Psoas muscle (tissue), 8 donors: ENCODE measurements at regions of chr13 and their contacts with region 1.

Region 1: DNA sequence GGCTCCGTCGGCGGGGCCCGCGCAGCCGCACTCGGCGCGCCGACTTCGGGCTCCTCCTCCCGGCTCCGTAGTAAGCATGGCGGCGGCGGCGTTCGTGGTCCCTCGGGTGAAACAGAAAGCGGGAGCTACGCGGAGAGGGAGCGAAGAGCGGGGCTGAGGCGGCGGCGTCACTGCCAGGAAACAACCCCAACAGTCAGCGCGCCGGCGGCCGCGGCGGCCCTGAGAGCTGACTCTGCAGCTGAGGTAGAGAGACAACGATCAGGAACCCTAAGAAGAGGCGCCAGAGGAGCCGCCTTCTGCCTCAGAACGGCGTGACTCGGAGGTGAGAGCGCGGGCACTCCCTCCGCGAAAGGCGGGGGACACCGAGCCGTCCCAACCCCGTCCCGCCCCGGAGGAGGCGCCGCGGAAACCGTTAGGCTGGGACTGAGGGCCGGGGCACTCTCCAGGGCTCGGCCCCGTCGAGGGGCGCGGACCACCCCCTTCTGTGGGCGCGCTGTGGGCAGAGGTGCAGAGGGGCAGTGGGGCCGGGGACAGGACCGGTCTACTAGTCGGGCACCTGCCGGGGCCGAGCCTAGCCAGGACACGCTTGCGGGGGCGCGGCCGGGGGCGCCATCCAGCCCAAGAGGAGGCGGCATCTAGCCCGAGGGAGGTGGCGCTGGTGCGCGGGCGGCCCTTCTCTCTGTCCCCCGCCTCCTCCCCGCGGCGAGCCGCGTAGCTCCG is at the start of gene FNDC3A:
- DNase-seq: peak; percentile 80 to 90
- ATAC-seq: peak; percentile 90 to 92 (median 92)
- H3K4me3 ChIP-seq: peak within 1 kb of the TSS; percentile 96
- H3K27ac ChIP-seq: peak within 1 kb of the TSS; percentile 96
- H3K4me1 ChIP-seq: peaks cover 27% of the 10 kb centered on the region
- H3K27me3 ChIP-seq: no peaks in the 10 kb centered on the region
- CTCF ChIP-seq: no peak
- total RNA-seq, gene FNDC3A: 10.5 to 18.6 (median 10.9) TPM

Region 2: DNA sequence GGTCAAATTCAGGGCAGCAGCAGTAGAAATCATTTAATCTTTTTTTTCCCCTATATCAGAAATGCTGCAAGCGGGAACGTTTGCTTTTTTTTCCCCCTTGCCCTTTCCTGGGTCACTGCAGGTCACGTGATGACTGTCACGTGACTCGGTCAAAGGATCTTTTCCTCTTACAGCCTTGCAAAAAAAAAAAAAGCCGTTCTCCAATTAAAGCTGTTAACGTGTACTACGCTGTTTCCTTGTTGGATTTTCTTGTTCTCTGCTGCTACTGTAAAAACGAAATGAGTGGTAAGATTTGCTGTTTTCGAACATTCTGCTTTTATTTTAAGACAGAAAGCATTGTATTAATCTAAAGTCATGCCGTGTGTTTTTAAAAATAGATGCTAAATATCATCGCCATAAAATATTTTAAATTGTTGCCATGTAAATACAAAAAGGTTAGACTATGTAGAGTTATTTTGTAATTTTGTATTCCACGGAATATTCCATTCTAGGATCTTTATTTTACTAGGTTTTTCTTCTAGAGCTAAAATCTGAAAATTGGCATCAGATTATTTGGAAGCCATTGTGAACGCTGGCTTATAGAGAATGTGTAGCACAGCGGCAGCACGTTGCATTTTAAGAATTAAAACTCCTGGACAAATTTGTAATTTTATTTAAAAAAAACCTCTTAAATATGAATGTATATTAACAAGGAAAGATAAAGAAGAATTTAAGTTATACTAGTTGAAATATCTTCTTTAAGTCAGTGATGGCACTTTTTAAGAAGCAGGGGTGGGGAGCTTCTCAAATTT is 134.3 kb after region 1 on chr13:
- intact Hi-C with region 1: loop called in 1 of 2 experiments (anchors 10 kb)
- DNase-seq: peak; percentile 82 to 87
- ATAC-seq: peak; percentile 86 to 97 (median 92)
- H3K4me3 ChIP-seq: peak overlapping the region; percentile 86
- H3K27ac ChIP-seq: peak overlapping the region; percentile 82
- H3K4me1 ChIP-seq: peaks cover 26% of the 10 kb centered on the region
- H3K27me3 ChIP-seq: no peaks in the 10 kb centered on the region
- CTCF ChIP-seq: no peak

Region 3: GRCh38 chr13:49247643-49248621 is 271.9 kb after region 1 on chr13 and contains the start of gene CDADC1:
- intact Hi-C with region 1: loop called in 1 of 2 experiments (anchors 5 kb)
- DNase-seq: peak; percentile 98 to 99
- ATAC-seq: peak; percentile 99 to 100 (median 100)
- H3K4me3 ChIP-seq: peak within 1 kb of the TSS; percentile 96
- H3K27ac ChIP-seq: peak within 1 kb of the TSS; percentile 92
- H3K4me1 ChIP-seq: peaks cover 12% of the 10 kb centered on the region
- H3K27me3 ChIP-seq: no peaks in the 10 kb centered on the region
- CTCF ChIP-seq: no peak
- total RNA-seq, gene CDADC1: 3.3 to 7.5 (median 5.4) TPM